Aorta (tissue), 5 donors: ENCODE measurements at regions of chr17 and their contacts with region 1.

Region 1: GRCh38 chr17:58525181-58525601 is 10.8 kb upstream of the MTMR4 start:
- DNase-seq: peak; percentile 85 to 89
- ATAC-seq: peak; percentile 75
- H3K4me3 ChIP-seq: no peak overlapping the region
- H3K27ac ChIP-seq: peak overlapping the region in 1 of 2 donors; percentile 62
- H3K4me1 ChIP-seq: no peaks in the 10 kb centered on the region
- H3K27me3 ChIP-seq: no peaks in the 10 kb centered on the region

Region 2: GRCh38 chr17:58577642-58578091 is 52.5 kb after region 1 on chr17:
- intact Hi-C with region 1: loop called in 1 of 2 experiments (anchors 5 kb)
- DNase-seq: peak in 1 of 2 donors; percentile 55
- ATAC-seq: no peak
- H3K4me3 ChIP-seq: no peak overlapping the region
- H3K27ac ChIP-seq: no peak overlapping the region
- H3K4me1 ChIP-seq: no peaks in the 10 kb centered on the region
- H3K27me3 ChIP-seq: no peaks in the 10 kb centered on the region